Activated CD8-positive, alpha-beta T cell treated with anti-CD3 and anti-CD28 coated beads, Interleukin-2, amount 10 ng/mL, durations not matched to agents 7 days and 5 days (primary cell): ENCODE measurements at regions of chr2 and their contacts with region 1.

Region 1: GRCh38 chr2:42132966-42133641 is 36.0 kb upstream of the EML4 start:
- DNase-seq: peak; percentile 96
- ATAC-seq: peak; percentile 92
- H3K4me3 Mint-ChIP-seq: peak overlapping the region; percentile 65
- H3K27ac Mint-ChIP-seq: peak overlapping the region; percentile 95
- H3K4me1 Mint-ChIP-seq: peaks cover 89% of the 10 kb centered on the region
- H3K27me3 Mint-ChIP-seq: no peaks in the 10 kb centered on the region

Region 2: GRCh38 chr2:41928526-41928925 is 204.6 kb before region 1 on chr2:
- CTCF ChIA-PET with region 1: no interaction called
- POLR2A ChIA-PET with region 1: no interaction called
- DNase-seq: no peak
- ATAC-seq: no peak
- H3K4me3 Mint-ChIP-seq: no peak overlapping the region
- H3K27ac Mint-ChIP-seq: no peak overlapping the region
- H3K4me1 Mint-ChIP-seq: no peaks in the 10 kb centered on the region
- H3K27me3 Mint-ChIP-seq: no peaks in the 10 kb centered on the region

Region 3: DNA sequence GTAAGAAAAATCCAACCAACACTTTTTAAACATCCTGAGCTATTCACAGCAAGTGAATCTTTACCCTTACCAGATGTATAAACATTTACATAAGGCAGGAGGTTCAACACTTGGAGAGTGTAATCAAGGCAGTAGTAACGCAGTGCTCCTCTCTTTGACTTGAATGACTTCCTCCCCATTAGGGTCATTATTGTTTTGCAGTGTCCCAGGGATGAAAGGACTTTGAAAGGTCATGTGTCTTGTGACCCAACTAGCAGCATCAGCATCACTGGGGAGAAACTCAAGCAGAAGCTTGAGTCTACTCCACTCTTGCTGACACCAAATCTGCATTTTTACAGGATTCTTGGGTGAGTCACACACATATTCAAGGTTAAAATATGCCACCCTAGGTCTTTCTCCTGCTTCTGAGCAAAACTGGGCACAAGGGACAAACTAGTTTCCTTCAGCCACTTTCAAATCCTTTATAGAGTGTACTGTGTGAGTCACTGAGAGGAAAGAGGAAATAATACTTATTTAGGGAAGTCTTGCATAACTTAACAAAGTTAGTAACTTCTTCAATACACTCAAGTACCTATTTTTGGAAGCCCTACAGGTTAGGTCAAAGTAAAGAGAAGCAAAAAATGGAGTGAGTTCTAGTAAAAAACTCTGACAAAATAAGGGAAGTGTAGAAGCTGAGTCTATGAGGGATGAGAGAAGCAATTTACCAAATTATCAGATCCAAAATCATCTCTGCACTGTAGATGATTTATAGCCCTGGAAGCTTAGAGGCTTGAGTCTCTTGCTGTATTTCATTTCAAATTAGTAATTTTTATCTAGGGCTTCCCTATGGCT is 15.0 kb before region 1 on chr2:
- CTCF ChIA-PET with region 1: interaction called, 14 read pairs
- POLR2A ChIA-PET with region 1: interaction called, 20 read pairs
- DNase-seq: no peak
- ATAC-seq: peak; percentile 67
- H3K4me3 Mint-ChIP-seq: no peak overlapping the region
- H3K27ac Mint-ChIP-seq: peak overlapping the region; percentile 41
- H3K4me1 Mint-ChIP-seq: peaks cover 39% of the 10 kb centered on the region
- H3K27me3 Mint-ChIP-seq: peaks cover 2% of the 10 kb centered on the region

Region 4: GRCh38 chr2:42153944-42154581 is 21.0 kb after region 1 on chr2:
- CTCF ChIA-PET with region 1: no interaction called
- POLR2A ChIA-PET with region 1: no interaction called
- DNase-seq: no peak
- ATAC-seq: no peak
- H3K4me3 Mint-ChIP-seq: no peak overlapping the region
- H3K27ac Mint-ChIP-seq: peak overlapping the region; percentile 12
- H3K4me1 Mint-ChIP-seq: no peaks in the 10 kb centered on the region
- H3K27me3 Mint-ChIP-seq: no peaks in the 10 kb centered on the region